ENCODE measurements at regions of chr1 and their contacts with region 1.

Region 1: GRCh38 chr1:156226116-156226538 is 13.3 kb downstream of the PMF1 start:
- DNase-seq: peak; percentile 90
- ATAC-seq: peak; percentile 87
- H3K4me3 ChIP-seq: no peak overlapping the region
- H3K27ac ChIP-seq: peak overlapping the region; percentile 98
- H3K4me1 ChIP-seq: peaks cover 25% of the 10 kb centered on the region
- H3K27me3 ChIP-seq: no peaks in the 10 kb centered on the region
- CTCF ChIP-seq: no peak
- EP300 ChIP-seq: peak; percentile 79 to 92
- POLR2A ChIP-seq: no peak; the same call in 1 of the 2 replicates
- RAD21 ChIP-seq: no peak

Region 2: DNA sequence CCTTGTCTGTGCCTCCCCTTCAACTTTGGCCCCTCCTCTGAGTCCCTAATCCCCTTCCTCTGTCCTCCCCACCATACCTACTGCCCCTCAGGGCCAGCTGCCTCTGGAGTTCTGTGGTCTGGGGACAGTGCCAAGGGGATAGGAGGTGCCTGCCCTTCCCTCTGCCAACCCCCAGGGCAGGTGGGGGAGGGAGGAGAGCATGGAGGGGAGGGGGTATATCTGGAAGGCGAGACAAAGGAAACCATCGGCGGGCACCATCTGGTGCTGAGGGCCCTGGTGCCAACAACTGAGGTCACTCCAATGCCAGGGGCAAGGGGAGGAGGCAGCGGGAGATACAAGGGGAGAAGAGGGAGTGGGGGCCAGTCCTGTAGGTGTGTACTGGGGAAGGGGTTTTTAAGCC is 155.6 kb before region 1 on chr1:
- CTCF ChIA-PET with region 1: no interaction called
- POLR2A ChIA-PET with region 1: no interaction called
- RAD21 ChIA-PET with region 1: no interaction called
- SMC1A ChIA-PET with region 1: no interaction called
- in situ Hi-C with region 1: no loop called
- intact Hi-C with region 1: no loop called
- DNase-seq: no peak
- ATAC-seq: no peak
- H3K4me3 ChIP-seq: no peak overlapping the region
- H3K27ac ChIP-seq: no peak overlapping the region
- H3K4me1 ChIP-seq: no peaks in the 10 kb centered on the region; the same call in 1 of the 2 replicates
- H3K27me3 ChIP-seq: no peaks in the 10 kb centered on the region
- CTCF ChIP-seq: no peak
- EP300 ChIP-seq: no peak
- POLR2A ChIP-seq: no peak
- RAD21 ChIP-seq: no peak

Region 3: DNA sequence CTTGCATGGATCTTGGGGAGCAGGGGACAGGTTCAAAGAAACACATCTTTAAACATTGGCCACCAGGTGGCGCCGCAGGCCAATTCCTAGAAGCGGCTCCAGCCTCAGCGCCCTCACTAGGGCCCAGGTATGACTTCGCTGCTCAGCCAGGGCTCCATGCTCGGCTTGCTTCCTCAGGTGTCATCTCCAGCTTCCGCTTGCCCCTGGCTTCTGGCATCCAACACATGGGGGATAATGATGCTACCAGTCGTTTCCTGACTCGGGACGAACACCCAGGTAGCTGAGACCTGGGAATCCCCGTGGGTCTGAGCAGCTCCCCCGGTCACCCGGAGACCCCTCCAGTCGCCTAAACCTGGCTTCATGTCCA is 135.3 kb before region 1 on chr1:
- CTCF ChIA-PET with region 1: interaction called, 44 read pairs
- POLR2A ChIA-PET with region 1: interaction called, 5 read pairs
- RAD21 ChIA-PET with region 1: interaction called, 11 read pairs
- SMC1A ChIA-PET with region 1: interaction called, 19 read pairs
- in situ Hi-C with region 1: loop called (anchors 5 kb)
- intact Hi-C with region 1: loop called (anchors 1 kb)
- DNase-seq: no peak
- ATAC-seq: peak; percentile 99
- H3K4me3 ChIP-seq: no peak overlapping the region
- H3K27ac ChIP-seq: no peak overlapping the region
- H3K4me1 ChIP-seq: peaks cover 5% of the 10 kb centered on the region
- H3K27me3 ChIP-seq: no peaks in the 10 kb centered on the region
- CTCF ChIP-seq: peak; percentile 69 to 90 (median 73)
- EP300 ChIP-seq: no peak
- POLR2A ChIP-seq: no peak
- RAD21 ChIP-seq: peak; percentile 92

Region 4: GRCh38 chr1:156146020-156146768 is 79.9 kb before region 1 on chr1:
- CTCF ChIA-PET with region 1: interaction called, 502 read pairs
- POLR2A ChIA-PET with region 1: interaction called, 84 read pairs
- RAD21 ChIA-PET with region 1: interaction called, 361 read pairs
- SMC1A ChIA-PET with region 1: interaction called, 411 read pairs
- in situ Hi-C with region 1: loop called (anchors 5 kb)
- intact Hi-C with region 1: loop called (anchors 1 kb)
- DNase-seq: peak; percentile 66
- ATAC-seq: peak; percentile 62
- H3K4me3 ChIP-seq: peak overlapping the region; percentile 30
- H3K27ac ChIP-seq: peak overlapping the region; percentile 67
- H3K4me1 ChIP-seq: peaks cover 49% of the 10 kb centered on the region
- H3K27me3 ChIP-seq: no peaks in the 10 kb centered on the region
- CTCF ChIP-seq: peak; percentile 74 to 82 (median 77)
- EP300 ChIP-seq: no peak
- POLR2A ChIP-seq: no peak
- RAD21 ChIP-seq: peak; percentile 94

Region 5: DNA sequence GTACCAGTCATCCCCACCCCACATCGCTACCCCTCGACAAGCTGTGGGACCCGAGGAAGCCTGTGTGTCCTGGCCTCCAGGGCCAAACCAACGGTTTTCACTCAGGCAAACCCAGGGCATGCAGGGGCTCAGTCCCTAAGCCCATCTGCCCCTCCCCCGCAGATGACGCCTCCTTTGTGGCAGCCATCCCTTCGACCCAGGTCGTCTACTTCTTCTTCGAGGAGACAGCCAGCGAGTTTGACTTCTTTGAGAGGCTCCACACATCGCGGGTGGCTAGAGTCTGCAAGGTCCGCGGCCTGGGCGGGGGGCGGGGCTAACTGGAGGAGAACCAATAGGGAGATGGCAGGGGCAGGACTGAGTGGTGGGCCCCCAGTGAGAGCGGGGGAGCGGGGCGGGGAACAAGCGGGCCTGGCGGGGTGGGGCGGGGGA is 65.4 kb before region 1 on chr1:
- CTCF ChIA-PET with region 1: interaction called, 502 read pairs
- POLR2A ChIA-PET with region 1: interaction called, 21 read pairs
- RAD21 ChIA-PET with region 1: interaction called, 361 read pairs
- SMC1A ChIA-PET with region 1: interaction called, 411 read pairs
- in situ Hi-C with region 1: no loop called
- intact Hi-C with region 1: no loop called
- DNase-seq: no peak
- ATAC-seq: peak; percentile 48
- H3K4me3 ChIP-seq: no peak overlapping the region
- H3K27ac ChIP-seq: no peak overlapping the region; the same call in 1 of the 2 replicates
- H3K4me1 ChIP-seq: peaks cover 48% of the 10 kb centered on the region
- H3K27me3 ChIP-seq: no peaks in the 10 kb centered on the region
- CTCF ChIP-seq: no peak
- EP300 ChIP-seq: no peak
- POLR2A ChIP-seq: no peak
- RAD21 ChIP-seq: no peak

Region 6: DNA sequence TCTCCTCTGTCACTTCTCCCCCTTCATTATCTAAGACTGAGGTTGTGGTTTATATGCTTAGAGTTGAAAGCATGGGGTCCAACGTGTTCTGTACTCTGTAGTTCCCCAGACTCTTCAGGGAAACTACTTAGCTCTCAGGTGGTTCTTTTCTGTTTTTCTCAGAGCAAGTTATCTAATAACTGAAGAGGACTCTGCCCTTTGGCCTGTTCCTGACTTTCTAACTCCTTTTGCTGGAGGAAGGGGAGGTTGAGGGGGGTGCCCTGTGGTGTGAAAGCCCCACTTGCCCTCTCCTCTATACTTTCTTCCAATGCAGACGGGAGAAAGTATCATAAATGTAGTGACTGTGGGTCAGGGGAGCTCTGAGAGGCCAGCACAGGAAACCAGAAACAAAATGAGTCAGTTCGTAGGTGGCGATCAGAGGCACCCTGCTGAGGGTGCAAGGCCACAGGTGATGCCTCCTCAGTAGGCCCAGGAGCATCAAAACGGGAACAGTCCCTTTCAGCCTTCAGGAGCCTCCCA is 27.2 kb before region 1 on chr1:
- CTCF ChIA-PET with region 1: interaction called, 76 read pairs
- POLR2A ChIA-PET with region 1: interaction called, 4 read pairs
- RAD21 ChIA-PET with region 1: interaction called, 44 read pairs
- SMC1A ChIA-PET with region 1: interaction called, 39 read pairs
- in situ Hi-C with region 1: no loop called
- intact Hi-C with region 1: no loop called
- DNase-seq: peak; percentile 41
- ATAC-seq: peak; percentile 80
- H3K4me3 ChIP-seq: peak overlapping the region; percentile 50; the same call in 1 of the 2 replicates
- H3K27ac ChIP-seq: peak overlapping the region; percentile 69
- H3K4me1 ChIP-seq: peaks cover 11% of the 10 kb centered on the region
- H3K27me3 ChIP-seq: no peaks in the 10 kb centered on the region
- CTCF ChIP-seq: no peak
- EP300 ChIP-seq: peak in 1 of 2 experiments; percentile 21; a peak in 2 of 4 replicates
- POLR2A ChIP-seq: no peak
- RAD21 ChIP-seq: no peak

Region 7: GRCh38 chr1:156282479-156283222 is 56.5 kb after region 1 on chr1 and contains the start of gene SMG5:
- CTCF ChIA-PET with region 1: interaction called, 26 read pairs
- POLR2A ChIA-PET with region 1: interaction called, 11 read pairs
- RAD21 ChIA-PET with region 1: interaction called, 16 read pairs
- SMC1A ChIA-PET with region 1: interaction called, 16 read pairs
- in situ Hi-C with region 1: no loop called
- intact Hi-C with region 1: no loop called
- DNase-seq: peak; percentile 96
- ATAC-seq: peak; percentile 93
- H3K4me3 ChIP-seq: peak within 1 kb of the TSS; percentile 94
- H3K27ac ChIP-seq: peak within 1 kb of the TSS; percentile 86
- H3K4me1 ChIP-seq: peaks cover 15% of the 10 kb centered on the region; the same call in 1 of the 2 replicates
- H3K27me3 ChIP-seq: no peaks in the 10 kb centered on the region
- CTCF ChIP-seq: no peak
- EP300 ChIP-seq: no peak
- POLR2A ChIP-seq: peak; percentile 100
- RAD21 ChIP-seq: no peak
- polyA plus RNA-seq, gene SMG5: 0.76 to 1.9 TPM

Region 8: GRCh38 chr1:156338180-156338973 is 112.2 kb after region 1 on chr1 and contains the starts of genes CCT3 and TSACC:
- CTCF ChIA-PET with region 1: interaction called, 11 read pairs
- POLR2A ChIA-PET with region 1: no interaction called
- RAD21 ChIA-PET with region 1: no interaction called
- SMC1A ChIA-PET with region 1: no interaction called
- in situ Hi-C with region 1: no loop called
- intact Hi-C with region 1: no loop called
- DNase-seq: peak; percentile 100
- ATAC-seq: peak; percentile 96
- H3K4me3 ChIP-seq: peak within 1 kb of the TSS; percentile 96
- H3K27ac ChIP-seq: peak within 1 kb of the TSS; percentile 76
- H3K4me1 ChIP-seq: no peaks in the 10 kb centered on the region
- H3K27me3 ChIP-seq: no peaks in the 10 kb centered on the region
- CTCF ChIP-seq: no peak
- EP300 ChIP-seq: peak; percentile 45 to 75; a peak in 1 of 4 replicates
- POLR2A ChIP-seq: peak; percentile 89
- RAD21 ChIP-seq: no peak
- polyA plus RNA-seq, gene CCT3: 491 to 585 TPM
- polyA plus RNA-seq, gene TSACC: 0.82 to 1.0 TPM

Region 9: DNA sequence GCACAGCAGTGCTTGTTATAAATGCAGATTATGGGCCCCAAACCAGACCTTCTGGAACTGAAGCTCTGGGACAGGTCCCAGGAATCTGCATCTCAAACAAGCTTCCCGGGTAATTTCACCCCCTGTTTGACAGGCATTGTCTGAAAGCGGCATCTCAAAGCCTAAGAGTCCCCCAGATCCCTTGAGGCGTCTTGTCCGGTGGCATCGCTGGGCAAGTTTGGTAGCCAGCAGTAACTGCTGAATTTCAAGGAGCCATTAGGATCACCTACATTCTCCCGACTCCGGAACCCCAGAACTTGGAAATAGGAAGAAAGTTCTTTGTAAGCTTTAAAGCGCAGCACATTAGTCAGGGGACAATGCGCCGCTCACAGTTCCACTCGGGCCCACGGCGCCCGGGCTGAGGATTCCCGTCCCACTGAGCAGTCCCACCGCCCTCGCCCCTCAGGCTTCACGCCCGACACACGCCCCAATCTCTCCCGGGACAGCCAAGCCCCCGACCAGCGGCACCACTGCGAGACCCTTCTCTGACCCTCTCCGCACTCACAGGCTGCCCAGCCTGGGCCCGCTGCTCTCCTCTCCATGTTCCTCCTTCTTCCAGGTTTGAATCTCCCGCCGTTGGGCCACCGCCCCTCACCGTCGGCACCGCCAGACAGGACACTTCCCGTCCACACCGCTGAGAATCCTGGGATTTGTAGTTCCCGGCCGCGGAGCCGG is 346.0 kb after region 1 on chr1 and contains the start of gene IQGAP3:
- CTCF ChIA-PET with region 1: no interaction called
- POLR2A ChIA-PET with region 1: no interaction called
- RAD21 ChIA-PET with region 1: no interaction called
- SMC1A ChIA-PET with region 1: no interaction called
- in situ Hi-C with region 1: no loop called
- intact Hi-C with region 1: no loop called
- DNase-seq: peak; percentile 15
- ATAC-seq: peak; percentile 99
- H3K4me3 ChIP-seq: peak within 1 kb of the TSS; percentile 73
- H3K27ac ChIP-seq: no peak within 1 kb of the TSS
- H3K4me1 ChIP-seq: 0 out of 2 replicates have a peak, but pooled peaks cover 3% of the 10 kb centered on the region
- H3K27me3 ChIP-seq: no peaks in the 10 kb centered on the region; a peak in 1 of 4 replicates
- CTCF ChIP-seq: no peak
- EP300 ChIP-seq: no peak
- POLR2A ChIP-seq: no peak
- RAD21 ChIP-seq: no peak
- polyA plus RNA-seq, gene IQGAP3: 1.1 to 1.2 TPM

Measured in GM12878 (cell line).